ENCODE measurements at regions of chr6 and their contacts with region 1.

Region 1: DNA sequence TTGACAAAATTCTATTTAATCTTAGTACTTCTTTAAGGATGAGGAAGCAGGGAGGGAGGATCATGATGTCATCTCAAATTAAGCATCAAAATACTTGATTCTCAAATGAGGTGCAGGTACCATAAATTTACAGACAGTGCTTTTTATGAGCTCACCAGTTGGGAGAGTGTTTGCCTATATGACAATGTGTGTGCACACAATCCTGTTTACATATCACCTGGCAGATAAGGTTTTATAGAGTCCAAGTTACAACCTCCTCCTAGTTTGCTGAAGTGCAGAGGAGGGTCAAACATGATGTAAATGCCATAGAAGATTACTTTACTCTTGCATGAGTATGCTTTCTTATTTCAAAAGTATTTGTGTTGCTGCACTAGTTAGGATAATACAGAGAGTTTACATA is 6.4 kb downstream of the ATXN1 start:
- DNase-seq: peak; percentile 55 to 76
- H3K4me3 ChIP-seq: no peak overlapping the region
- H3K4me3 Mint-ChIP-seq: peak overlapping the region; percentile 56
- H3K27ac Mint-ChIP-seq: peak overlapping the region; percentile 83
- H3K4me1 ChIP-seq: peaks cover 62% of the 10 kb centered on the region
- H3K4me1 Mint-ChIP-seq: peaks cover 55% of the 10 kb centered on the region
- H3K27me3 ChIP-seq: no peaks in the 10 kb centered on the region
- H3K27me3 Mint-ChIP-seq: no peaks in the 10 kb centered on the region
- CTCF ChIP-seq: no peak

Region 2: DNA sequence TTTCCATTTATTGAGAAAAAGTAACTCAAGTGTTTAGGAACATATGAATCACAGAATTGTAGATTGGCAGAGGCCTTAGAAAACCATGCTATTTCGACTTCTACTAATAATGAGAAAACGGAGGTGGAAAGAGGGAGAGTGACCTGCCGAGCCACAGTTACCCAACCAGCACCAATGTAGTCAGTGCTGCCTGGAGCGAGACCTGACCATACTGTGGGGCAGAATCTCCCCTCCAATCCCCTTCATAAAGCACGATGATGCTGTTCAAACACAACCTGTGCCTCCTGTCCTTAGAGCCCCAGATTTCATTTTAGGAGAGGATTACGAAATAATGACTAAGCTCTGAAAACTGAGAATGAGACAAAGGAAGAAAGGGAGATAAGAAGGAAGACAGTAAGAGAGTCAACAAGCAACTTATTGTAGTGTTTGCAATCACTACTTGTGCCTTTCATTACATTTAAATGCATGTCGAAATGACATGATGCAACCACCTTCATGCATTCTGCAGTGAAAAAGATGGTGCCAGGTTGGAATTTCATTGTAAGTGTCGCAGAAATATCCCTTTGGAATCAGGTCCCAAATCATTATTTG is 64.2 kb before region 1 on chr6:
- CTCF ChIA-PET with region 1: no interaction called
- POLR2A ChIA-PET with region 1: interaction called, 7 read pairs
- intact Hi-C with region 1: loop called (anchors 1 kb)
- DNase-seq: peak in 1 of 2 experiments; percentile 59
- H3K4me3 ChIP-seq: no peak overlapping the region
- H3K4me3 Mint-ChIP-seq: peak overlapping the region; percentile 44
- H3K27ac Mint-ChIP-seq: peak overlapping the region; percentile 83
- H3K4me1 ChIP-seq: peaks cover 26% of the 10 kb centered on the region
- H3K4me1 Mint-ChIP-seq: peaks cover 24% of the 10 kb centered on the region
- H3K27me3 ChIP-seq: no peaks in the 10 kb centered on the region
- H3K27me3 Mint-ChIP-seq: no peaks in the 10 kb centered on the region
- CTCF ChIP-seq: no peak

Region 3: DNA sequence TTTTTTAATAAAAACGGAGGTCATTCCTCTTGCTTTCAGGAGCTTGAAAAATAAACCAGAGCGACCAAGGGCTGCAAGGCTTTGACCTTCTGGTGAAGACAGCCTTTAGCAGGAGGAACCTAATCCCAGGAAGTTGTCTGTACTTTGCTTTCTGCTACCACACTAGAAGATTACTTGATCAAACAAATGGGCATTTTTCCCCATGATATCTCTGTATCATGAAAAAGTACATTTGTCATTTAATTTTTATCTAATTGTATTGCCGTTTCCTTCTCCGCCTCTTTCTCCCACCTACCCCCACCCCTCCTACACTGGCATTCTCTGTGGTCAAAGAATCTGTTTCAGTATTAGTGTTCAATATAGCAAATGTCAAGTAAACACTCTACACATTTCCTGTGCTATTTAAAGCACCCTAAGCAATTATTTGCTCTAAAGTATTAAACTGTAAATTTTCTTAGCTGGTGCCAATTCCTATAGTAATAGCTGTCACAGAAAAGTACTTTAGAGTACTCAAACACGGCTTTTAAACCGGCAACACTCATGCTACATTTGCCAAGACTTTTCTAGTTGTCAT is 23.3 kb before region 1 on chr6:
- CTCF ChIA-PET with region 1: no interaction called
- POLR2A ChIA-PET with region 1: no interaction called
- intact Hi-C with region 1: loop called (anchors 2 kb)
- DNase-seq: no peak
- H3K4me3 ChIP-seq: no peak overlapping the region
- H3K4me3 Mint-ChIP-seq: peak overlapping the region; percentile 52
- H3K27ac Mint-ChIP-seq: no peak overlapping the region
- H3K4me1 ChIP-seq: peaks cover 27% of the 10 kb centered on the region
- H3K4me1 Mint-ChIP-seq: peaks cover 31% of the 10 kb centered on the region
- H3K27me3 ChIP-seq: no peaks in the 10 kb centered on the region
- H3K27me3 Mint-ChIP-seq: no peaks in the 10 kb centered on the region
- CTCF ChIP-seq: no peak

Measured in Caco-2 (cell line).